Pancreas (tissue), 10 donors: ENCODE measurements at regions of chr1 and their contacts with region 1.

Region 1: GRCh38 chr1:46747683-46748288 is 28.9 kb upstream of the EFCAB14 start:
- DNase-seq: peak in 1 of 6 donors; percentile 43
- ATAC-seq: peak in 3 of 4 donors; percentile 87 to 90 (median 87)
- H3K4me3 ChIP-seq: no peak overlapping the region
- H3K27ac ChIP-seq: no peak overlapping the region
- H3K4me1 ChIP-seq: no peaks in the 10 kb centered on the region
- H3K27me3 ChIP-seq: no peaks in the 10 kb centered on the region
- CTCF ChIP-seq: peak; percentile 20 to 50 (median 42)

Region 2: GRCh38 chr1:46991083-46991923 is 243.5 kb after region 1 on chr1:
- intact Hi-C with region 1: loop called in 1 of 3 experiments (anchors 10 kb)
- DNase-seq: no peak
- ATAC-seq: peak in 3 of 4 donors; percentile 27 to 74 (median 60)
- H3K4me3 ChIP-seq: no peak overlapping the region
- H3K27ac ChIP-seq: no peak overlapping the region
- H3K4me1 ChIP-seq: no peaks in the 10 kb centered on the region
- H3K27me3 ChIP-seq: no peaks in the 10 kb centered on the region
- CTCF ChIP-seq: peak in 1 of 4 donors; percentile 14